Endothelial cell of umbilical vein (primary cell): ENCODE measurements at regions of chr2 and their contacts with region 1.

Region 1: DNA sequence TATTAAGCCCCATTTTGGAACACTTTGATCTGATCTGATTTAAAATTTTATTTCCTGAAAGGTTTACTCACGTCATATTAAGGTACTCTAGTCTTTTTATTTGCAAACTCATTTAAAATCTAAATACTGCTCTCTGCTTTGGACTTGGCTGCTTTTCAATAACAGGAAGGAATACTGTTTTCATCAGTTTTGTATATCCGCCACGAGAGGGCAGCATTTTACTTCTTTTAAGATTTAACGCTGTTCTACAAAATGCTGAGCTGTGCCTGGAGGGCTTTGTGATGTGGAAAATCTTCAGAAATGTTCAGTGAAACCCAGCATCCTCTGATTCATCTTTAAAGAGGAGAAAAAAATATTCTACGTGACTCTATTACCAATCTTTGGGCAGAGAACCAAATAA is 37.5 kb upstream of the SLC38A11 start:
- DNase-seq: peak; percentile 71
- H3K4me3 ChIP-seq: no peak overlapping the region
- H3K27ac ChIP-seq: no peak overlapping the region
- H3K4me1 ChIP-seq: no peaks in the 10 kb centered on the region
- H3K27me3 ChIP-seq: no peaks in the 10 kb centered on the region
- CTCF ChIP-seq: peak; percentile 19 to 22
- POLR2A ChIP-seq: no peak

Region 2: DNA sequence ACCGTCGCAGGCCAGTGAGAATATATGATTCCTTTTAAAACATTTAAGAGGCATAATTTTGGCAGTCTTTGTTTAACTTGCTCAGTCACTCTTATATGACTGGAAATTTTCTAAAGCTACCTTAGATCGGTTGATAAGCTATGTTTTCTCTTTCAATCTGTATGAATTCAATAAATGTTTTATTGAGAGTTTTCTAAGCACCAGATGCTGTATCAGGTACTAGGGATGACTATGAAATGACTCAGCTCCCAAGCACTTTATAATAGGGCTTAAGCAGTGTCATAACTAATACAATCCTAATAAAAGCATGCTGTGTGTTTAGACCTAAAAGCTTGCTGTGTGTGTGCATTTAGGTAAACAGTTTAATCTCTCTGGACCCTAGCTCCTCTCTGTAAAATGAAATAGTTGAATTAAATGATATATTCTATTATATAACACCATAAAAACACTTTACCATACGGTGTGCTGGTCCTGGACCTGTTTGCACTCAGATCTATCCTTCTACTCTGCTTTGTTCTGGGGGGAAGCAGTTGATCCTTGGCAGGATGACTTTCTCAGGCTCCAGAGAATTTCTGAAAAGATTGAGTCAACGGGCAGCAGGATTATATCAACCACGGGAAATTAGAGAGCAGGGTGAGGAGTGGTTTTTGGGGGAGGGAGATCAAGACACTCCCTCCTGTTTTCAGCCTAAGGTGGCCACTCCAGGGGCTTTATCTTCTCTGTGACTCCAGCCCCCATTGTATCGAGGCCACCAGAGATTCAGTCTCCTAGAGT is 11.4 kb before region 1 on chr2:
- CTCF ChIA-PET with region 1: interaction called, 28 read pairs
- POLR2A ChIA-PET with region 1: no interaction called
- dilution Hi-C with region 1: no loop called
- intact Hi-C with region 1: no loop called
- DNase-seq: peak; percentile 46
- H3K4me3 ChIP-seq: no peak overlapping the region
- H3K27ac ChIP-seq: peak overlapping the region; percentile 37
- H3K4me1 ChIP-seq: peaks cover 16% of the 10 kb centered on the region
- H3K27me3 ChIP-seq: no peaks in the 10 kb centered on the region
- CTCF ChIP-seq: no peak
- POLR2A ChIP-seq: no peak

Region 3: DNA sequence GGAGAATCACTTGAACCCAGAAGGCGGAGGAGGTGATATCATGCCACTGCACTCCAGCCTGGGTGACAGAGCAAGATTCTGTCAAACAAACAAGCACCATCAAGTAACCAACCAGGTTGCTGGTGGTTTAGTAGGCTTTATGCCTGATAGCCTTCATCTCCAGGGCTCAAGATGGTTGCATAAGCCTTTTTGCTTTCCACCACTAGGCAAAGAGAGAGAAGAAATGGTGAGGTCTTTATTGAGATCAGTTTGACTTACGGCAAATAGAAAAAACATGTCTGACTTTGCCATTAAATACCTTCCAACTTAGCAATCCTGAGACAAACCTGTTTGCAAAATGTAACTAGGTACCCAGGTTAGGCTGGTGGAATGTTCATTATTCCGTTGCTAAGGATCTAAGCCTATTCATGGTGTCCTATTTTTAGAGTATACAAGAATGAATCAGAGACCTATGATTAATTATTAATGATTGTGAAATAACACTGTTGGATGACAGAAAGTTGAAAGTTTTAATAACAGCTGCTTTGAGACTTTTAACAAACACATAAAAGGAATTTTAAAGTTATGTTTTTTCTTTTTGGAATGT is 16.0 kb after region 1 on chr2:
- CTCF ChIA-PET with region 1: interaction called, 35 read pairs
- POLR2A ChIA-PET with region 1: no interaction called
- dilution Hi-C with region 1: no loop called
- intact Hi-C with region 1: no loop called
- DNase-seq: no peak
- H3K4me3 ChIP-seq: no peak overlapping the region
- H3K27ac ChIP-seq: no peak overlapping the region
- H3K4me1 ChIP-seq: no peaks in the 10 kb centered on the region
- H3K27me3 ChIP-seq: peaks cover 9 to 17% of the 10 kb centered on the region in 2 experiments
- CTCF ChIP-seq: no peak
- POLR2A ChIP-seq: no peak

Region 4: GRCh38 chr2:165293440-165294353 is 300.9 kb after region 1 on chr2:
- CTCF ChIA-PET with region 1: interaction called, 36 read pairs
- POLR2A ChIA-PET with region 1: no interaction called
- dilution Hi-C with region 1: no loop called
- intact Hi-C with region 1: loop called (anchors 1 kb)
- DNase-seq: peak; percentile 73
- H3K4me3 ChIP-seq: no peak overlapping the region
- H3K27ac ChIP-seq: no peak overlapping the region
- H3K4me1 ChIP-seq: no peaks in the 10 kb centered on the region
- H3K27me3 ChIP-seq: peaks cover 3 to 9% of the 10 kb centered on the region in 2 experiments
- CTCF ChIP-seq: peak; percentile 50 to 66
- POLR2A ChIP-seq: no peak